Activated CD4-positive, alpha-beta T cell treated with anti-CD3 and anti-CD28 coated beads for 36 hours (primary cell): ENCODE measurements at regions of chr12 and their contacts with region 1.

Region 1: GRCh38 chr12:1634590-1635191 is 5.7 kb downstream of the WNT5B start:
- DNase-seq: peak; percentile 82
- ATAC-seq: peak; percentile 73
- H3K4me3 Mint-ChIP-seq: no peak overlapping the region
- H3K27ac Mint-ChIP-seq: no peak overlapping the region
- H3K4me1 Mint-ChIP-seq: peaks cover 13% of the 10 kb centered on the region
- H3K27me3 Mint-ChIP-seq: peaks cover 51% of the 10 kb centered on the region

Region 2: DNA sequence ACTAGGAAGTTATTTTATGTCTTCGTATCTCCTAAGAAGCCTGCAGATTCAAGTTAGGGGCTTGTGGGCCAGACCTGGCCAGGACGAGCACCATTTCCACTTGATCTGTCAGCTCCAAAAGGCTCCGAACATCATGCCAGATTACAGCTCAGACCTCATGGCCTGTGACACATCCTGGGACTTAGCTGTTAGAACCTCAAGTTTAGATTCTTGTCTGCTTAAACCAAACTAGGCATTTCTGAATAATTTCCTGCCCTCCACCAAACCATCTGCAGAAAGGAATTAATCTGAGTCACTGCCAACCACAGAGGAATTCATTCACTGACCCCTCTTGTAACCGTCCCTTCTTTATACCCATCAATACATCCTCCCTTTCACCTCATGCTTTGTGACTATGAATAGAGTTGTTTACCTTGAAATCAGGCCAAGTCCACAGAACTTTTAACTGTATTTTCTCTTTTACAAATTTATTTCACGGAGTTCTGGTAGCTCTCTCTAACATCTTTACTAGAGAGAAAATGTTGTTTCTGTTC is 160.6 kb before region 1 on chr12:
- CTCF ChIA-PET with region 1: no interaction called
- POLR2A ChIA-PET with region 1: no interaction called
- intact Hi-C with region 1: no loop called
- DNase-seq: peak; percentile 41
- ATAC-seq: peak; percentile 83
- H3K4me3 Mint-ChIP-seq: no peak overlapping the region
- H3K27ac Mint-ChIP-seq: no peak overlapping the region
- H3K4me1 Mint-ChIP-seq: peaks cover 2% of the 10 kb centered on the region
- H3K27me3 Mint-ChIP-seq: no peaks in the 10 kb centered on the region

Region 3: GRCh38 chr12:1644534-1645438 is 10.1 kb after region 1 on chr12:
- CTCF ChIA-PET with region 1: interaction called, 19 read pairs
- POLR2A ChIA-PET with region 1: no interaction called
- intact Hi-C with region 1: no loop called
- DNase-seq: no peak
- ATAC-seq: no peak
- H3K4me3 Mint-ChIP-seq: no peak overlapping the region
- H3K27ac Mint-ChIP-seq: no peak overlapping the region
- H3K4me1 Mint-ChIP-seq: peaks cover 2% of the 10 kb centered on the region
- H3K27me3 Mint-ChIP-seq: peaks cover 4% of the 10 kb centered on the region

Region 4: GRCh38 chr12:1650260-1650977 is 15.7 kb after region 1 on chr12:
- CTCF ChIA-PET with region 1: interaction called, 19 read pairs
- POLR2A ChIA-PET with region 1: no interaction called
- intact Hi-C with region 1: no loop called
- DNase-seq: no peak
- ATAC-seq: no peak
- H3K4me3 Mint-ChIP-seq: no peak overlapping the region
- H3K27ac Mint-ChIP-seq: no peak overlapping the region
- H3K4me1 Mint-ChIP-seq: peaks cover 1% of the 10 kb centered on the region
- H3K27me3 Mint-ChIP-seq: peaks cover 9% of the 10 kb centered on the region